ENCODE measurements at regions of chr1 and their contacts with region 1.

Region 1: GRCh38 chr1:155063550-155064110 is at the start of gene EFNA4:
- DNase-seq: peak; percentile 89
- H3K4me3 Mint-ChIP-seq: peak within 1 kb of the TSS; percentile 86
- H3K27ac Mint-ChIP-seq: no peak within 1 kb of the TSS
- H3K4me1 Mint-ChIP-seq: peaks cover 30% of the 10 kb centered on the region
- H3K27me3 Mint-ChIP-seq: no peaks in the 10 kb centered on the region
- total RNA-seq, gene EFNA4: 3.3 to 4.5 TPM

Region 2: GRCh38 chr1:154176337-154176736 is 887.3 kb before region 1 on chr1:
- CTCF ChIA-PET with region 1: no interaction called
- intact Hi-C with region 1: no loop called
- DNase-seq: no peak
- H3K4me3 Mint-ChIP-seq: no peak overlapping the region
- H3K27ac Mint-ChIP-seq: peak overlapping the region; percentile 52
- H3K4me1 Mint-ChIP-seq: peaks cover 76% of the 10 kb centered on the region
- H3K27me3 Mint-ChIP-seq: no peaks in the 10 kb centered on the region

Region 3: DNA sequence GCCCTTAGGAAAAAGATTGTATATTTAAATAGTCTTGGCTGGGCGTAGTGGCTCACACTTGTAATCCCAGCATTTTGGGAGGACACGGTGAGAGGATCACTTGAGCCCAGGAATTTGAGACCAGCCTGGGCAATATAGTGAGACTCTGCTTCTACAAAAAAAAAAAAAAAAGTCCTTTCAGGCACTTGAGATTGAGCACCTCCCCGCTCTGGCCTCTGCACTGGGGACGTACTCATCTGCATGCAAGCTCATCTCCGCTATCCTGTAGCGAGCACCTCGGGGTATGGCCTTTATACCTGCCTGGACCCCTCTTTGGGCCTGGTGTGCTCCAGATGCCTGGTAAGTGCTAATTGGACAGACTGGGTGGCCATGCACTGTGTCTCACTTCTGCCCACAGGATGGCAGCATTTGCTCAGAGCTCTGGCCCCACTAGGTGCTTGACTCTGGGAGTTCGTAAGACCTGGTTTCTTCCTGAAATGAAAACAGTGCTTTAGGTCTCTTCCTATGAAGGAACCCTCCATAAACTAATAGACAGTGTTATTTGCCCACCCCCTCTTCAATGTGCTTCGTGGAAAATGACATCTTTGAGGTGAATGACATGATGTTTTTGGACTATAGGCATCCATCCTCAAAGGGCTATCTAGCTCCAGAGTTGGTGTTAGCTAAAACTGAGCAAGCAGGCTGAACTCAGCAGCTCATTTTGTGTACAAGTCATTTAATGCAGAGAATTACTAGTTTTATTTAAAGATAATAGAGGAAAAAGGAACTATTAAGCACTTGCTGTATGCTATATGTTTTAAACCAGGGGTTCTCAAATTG is 394.0 kb before region 1 on chr1:
- CTCF ChIA-PET with region 1: interaction called, 3 read pairs
- intact Hi-C with region 1: loop called (anchors 5 kb)
- DNase-seq: peak; percentile 90
- H3K4me3 Mint-ChIP-seq: no peak overlapping the region
- H3K27ac Mint-ChIP-seq: no peak overlapping the region
- H3K4me1 Mint-ChIP-seq: peaks cover 34% of the 10 kb centered on the region
- H3K27me3 Mint-ChIP-seq: no peaks in the 10 kb centered on the region

Region 4: GRCh38 chr1:154961497-154962262 is 102.0 kb before region 1 on chr1 and contains the start of gene PYGO2:
- CTCF ChIA-PET with region 1: interaction called, 9 read pairs
- intact Hi-C with region 1: loop called (anchors 1 kb)
- DNase-seq: peak; percentile 86
- H3K4me3 Mint-ChIP-seq: peak within 1 kb of the TSS; percentile 96
- H3K27ac Mint-ChIP-seq: peak within 1 kb of the TSS; percentile 94
- H3K4me1 Mint-ChIP-seq: peaks cover 40% of the 10 kb centered on the region
- H3K27me3 Mint-ChIP-seq: no peaks in the 10 kb centered on the region
- total RNA-seq, gene PYGO2: 35.6 to 36.3 TPM

Region 5: GRCh38 chr1:155050560-155051341 is 12.9 kb before region 1 on chr1 and contains the start of gene ADAM15:
- CTCF ChIA-PET with region 1: interaction called, 197 read pairs
- intact Hi-C with region 1: loop called (anchors 1 kb)
- DNase-seq: peak; percentile 85
- H3K4me3 Mint-ChIP-seq: peak within 1 kb of the TSS; percentile 84
- H3K27ac Mint-ChIP-seq: no peak within 1 kb of the TSS
- H3K4me1 Mint-ChIP-seq: peaks cover 24% of the 10 kb centered on the region
- H3K27me3 Mint-ChIP-seq: no peaks in the 10 kb centered on the region
- total RNA-seq, gene ADAM15: 53.8 to 55.8 TPM

Region 6: DNA sequence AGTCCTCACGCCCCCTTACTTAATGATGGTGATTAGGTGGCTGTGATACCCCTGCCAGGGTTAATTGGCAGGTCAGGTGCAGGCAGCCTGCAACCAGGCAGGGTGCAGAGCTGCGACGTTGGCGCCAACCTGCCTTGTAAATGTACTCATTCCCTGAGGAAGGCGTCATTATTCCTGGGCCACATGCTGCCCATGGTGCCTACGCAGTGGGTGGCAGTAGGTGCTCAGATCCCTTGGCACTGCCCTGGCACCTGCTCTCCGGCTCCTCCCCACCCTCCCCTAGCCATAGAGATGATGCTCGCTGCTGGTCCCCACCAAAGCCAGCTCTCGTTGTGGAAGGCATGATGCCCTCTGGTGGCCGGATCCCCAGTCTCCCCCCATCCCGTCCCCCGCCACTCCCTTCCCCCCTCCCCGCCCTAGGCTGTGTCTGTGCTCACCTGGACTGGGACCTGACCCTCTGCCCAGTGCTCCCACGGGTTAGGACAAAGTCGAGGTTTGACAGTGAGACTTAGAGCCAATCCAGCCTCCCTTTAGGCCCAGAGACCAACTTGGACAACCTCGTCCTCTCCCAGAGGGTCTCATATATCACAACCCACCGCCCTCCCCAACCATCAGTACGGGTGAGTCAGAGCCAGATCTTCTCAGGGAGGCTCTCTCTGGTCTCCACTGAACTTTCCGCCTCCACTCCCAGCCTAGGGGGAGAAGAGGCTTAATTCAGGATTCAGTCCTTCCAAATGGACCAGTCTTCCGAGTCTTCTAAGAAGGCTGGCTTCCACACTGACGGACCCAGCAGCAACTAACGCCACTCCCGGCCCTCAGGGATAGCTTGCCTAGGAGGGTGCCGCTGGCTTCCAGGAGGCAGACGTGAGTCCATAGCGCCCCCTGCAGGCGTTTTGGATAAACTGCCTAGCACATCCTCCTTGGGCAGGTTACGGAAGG is 103.8 kb after region 1 on chr1:
- CTCF ChIA-PET with region 1: interaction called, 10 read pairs
- intact Hi-C with region 1: loop called (anchors 1 kb)
- DNase-seq: peak; percentile 95
- H3K4me3 Mint-ChIP-seq: peak overlapping the region; percentile 51
- H3K27ac Mint-ChIP-seq: no peak overlapping the region
- H3K4me1 Mint-ChIP-seq: peaks cover 24% of the 10 kb centered on the region
- H3K27me3 Mint-ChIP-seq: no peaks in the 10 kb centered on the region